HAP-1 (cell line): ENCODE measurements at regions of chr15 and their contacts with region 1.

Region 1: DNA sequence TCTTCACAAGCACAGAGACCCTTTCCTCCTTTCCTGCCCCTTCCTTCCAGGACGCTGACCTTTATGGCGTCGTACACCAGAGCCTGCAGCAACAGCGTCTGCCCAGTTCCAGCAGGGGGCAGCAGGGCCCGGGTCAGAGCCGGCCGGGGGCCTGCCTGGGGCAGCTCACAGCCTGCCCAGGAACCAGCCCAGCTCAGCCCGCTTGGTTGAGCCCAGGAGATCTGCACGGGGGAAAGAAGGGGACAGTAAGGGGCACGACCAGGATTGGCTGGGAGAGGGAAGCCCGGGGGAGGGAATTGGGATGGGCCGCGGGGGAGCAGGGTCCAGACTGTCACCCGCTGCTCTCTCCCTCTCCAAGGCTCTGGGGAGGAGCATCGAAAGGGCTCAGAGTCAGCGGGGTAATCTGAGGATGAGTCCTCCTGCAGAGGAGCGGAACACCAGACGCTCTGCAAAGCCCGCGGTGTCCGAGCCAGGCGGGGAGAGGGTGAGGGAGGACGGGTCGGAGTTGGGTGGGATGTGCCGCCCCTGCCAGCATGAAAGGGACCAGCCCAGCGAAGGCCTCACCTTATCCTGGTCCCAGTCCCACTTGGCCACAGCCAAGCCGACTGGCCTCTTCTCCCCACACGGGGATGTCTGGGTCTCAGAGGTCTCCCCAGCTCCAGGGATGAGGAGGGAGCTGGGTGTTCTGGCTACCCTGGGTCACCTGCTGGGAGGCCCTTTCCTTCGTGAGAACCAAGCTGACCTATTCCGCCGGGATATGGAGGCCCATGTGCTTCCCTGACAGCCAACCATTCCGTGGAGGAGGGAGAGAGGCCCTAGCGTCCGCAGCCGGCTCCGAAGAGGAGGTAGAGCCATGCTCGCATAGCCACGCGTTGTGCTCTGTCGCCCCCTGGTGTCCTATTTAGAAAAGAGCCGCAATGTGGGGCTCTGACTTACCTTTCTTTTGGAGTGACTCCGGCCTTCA is 7.4 kb upstream of the IGDCC3 start:
- DNase-seq: peak; percentile 99 to 100
- H3K4me3 ChIP-seq: peak overlapping the region; percentile 16
- H3K4me1 ChIP-seq: peaks cover 15% of the 10 kb centered on the region
- H3K27me3 ChIP-seq: no peaks in the 10 kb centered on the region

Region 2: DNA sequence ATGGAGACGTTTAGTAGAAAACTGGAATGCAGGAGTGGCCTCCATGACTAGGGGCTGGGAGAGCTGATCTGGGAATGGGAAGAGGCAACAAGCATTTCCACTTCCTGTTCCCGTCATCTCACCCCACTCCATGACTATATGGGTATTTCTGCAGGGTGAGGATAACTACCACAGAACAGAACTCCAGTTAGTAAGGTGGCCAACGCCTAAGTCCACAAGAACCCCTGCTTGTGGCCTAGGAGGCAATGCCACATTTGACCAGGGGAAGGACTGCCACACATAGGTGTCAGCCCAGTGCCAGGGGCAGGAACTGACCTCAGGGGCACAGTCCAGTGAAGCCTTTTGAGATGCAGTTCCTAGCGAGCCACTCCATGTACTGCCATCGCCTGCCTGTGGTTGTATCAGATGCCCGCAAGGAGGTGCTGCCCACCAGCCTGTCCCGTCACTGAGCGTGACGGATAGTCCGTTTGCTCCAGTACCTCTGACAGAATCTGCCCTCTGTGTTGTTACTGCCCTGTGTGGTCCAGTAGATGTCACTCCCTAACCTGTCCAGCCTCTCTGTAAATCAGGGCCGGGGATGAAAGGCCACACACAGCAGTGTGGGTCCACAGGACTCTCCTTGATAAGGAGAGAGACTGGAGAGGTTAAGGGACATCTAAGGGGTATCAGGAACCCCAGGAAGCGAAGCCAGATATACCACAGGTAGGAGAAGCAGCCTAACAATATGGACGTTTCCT is 352.2 kb before region 1 on chr15:
- in situ Hi-C with region 1: loop called (anchors 10 kb)
- DNase-seq: peak; percentile 89 to 92
- H3K4me3 ChIP-seq: no peak overlapping the region
- H3K4me1 ChIP-seq: peaks cover 9% of the 10 kb centered on the region
- H3K27me3 ChIP-seq: no peaks in the 10 kb centered on the region

Region 3: GRCh38 chr15:65194826-65195547 is 190.2 kb before region 1 on chr15:
- in situ Hi-C with region 1: loop called (anchors 5 kb)
- DNase-seq: no peak
- H3K4me3 ChIP-seq: no peak overlapping the region
- H3K4me1 ChIP-seq: no peaks in the 10 kb centered on the region
- H3K27me3 ChIP-seq: no peaks in the 10 kb centered on the region

Region 4: GRCh38 chr15:65245096-65245856 is 139.9 kb before region 1 on chr15:
- in situ Hi-C with region 1: no loop called
- DNase-seq: no peak
- H3K4me3 ChIP-seq: no peak overlapping the region
- H3K4me1 ChIP-seq: no peaks in the 10 kb centered on the region; the same call in 1 of the 2 replicates
- H3K27me3 ChIP-seq: no peaks in the 10 kb centered on the region

Region 5: DNA sequence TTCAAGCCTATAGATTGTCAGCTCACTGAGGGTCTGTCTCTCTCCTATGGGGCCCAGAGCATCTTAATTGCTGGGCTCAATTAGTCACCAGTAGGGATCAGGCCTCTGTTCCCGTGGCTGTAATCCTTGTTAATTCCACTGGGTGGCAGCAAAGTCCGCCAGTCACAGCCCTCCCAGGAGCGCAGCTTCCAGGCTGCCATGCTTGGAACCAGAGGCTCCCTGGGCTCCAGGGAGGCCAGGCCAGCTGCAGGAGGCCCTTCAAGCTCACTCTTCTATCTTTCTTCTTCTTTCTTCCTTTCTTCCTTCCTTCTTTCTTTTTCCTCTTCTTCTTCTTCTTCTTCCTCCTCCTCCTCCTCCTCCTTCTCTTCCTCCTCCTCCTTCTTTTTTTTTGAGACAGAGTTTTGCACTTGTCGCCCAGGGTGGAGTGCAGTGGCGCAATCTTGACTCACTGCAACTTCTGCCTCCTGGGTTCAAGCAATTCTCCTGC is 66.3 kb before region 1 on chr15:
- in situ Hi-C with region 1: loop called (anchors 5 kb)
- DNase-seq: peak; percentile 94 to 95
- H3K4me3 ChIP-seq: no peak overlapping the region
- H3K4me1 ChIP-seq: no peaks in the 10 kb centered on the region
- H3K27me3 ChIP-seq: no peaks in the 10 kb centered on the region